ENCODE measurements at regions of chr11 and their contacts with region 1.

Region 1: GRCh38 chr11:33065445-33066178 is 26.2 kb downstream of the TCP11L1 start:
- H3K4me3 ChIP-seq: no peak overlapping the region
- H3K27ac ChIP-seq: no peak overlapping the region
- H3K4me1 ChIP-seq: no peaks in the 10 kb centered on the region
- CTCF ChIP-seq: peak; percentile 76

Region 2: GRCh38 chr11:32809313-32809712 is 256.3 kb before region 1 on chr11:
- CTCF ChIA-PET with region 1: interaction called, 18 read pairs
- POLR2A ChIA-PET with region 1: no interaction called
- H3K4me3 ChIP-seq: no peak overlapping the region
- H3K27ac ChIP-seq: no peak overlapping the region
- H3K4me1 ChIP-seq: no peaks in the 10 kb centered on the region
- CTCF ChIP-seq: no peak

Region 3: GRCh38 chr11:32947978-32948377 is 117.6 kb before region 1 on chr11:
- CTCF ChIA-PET with region 1: no interaction called
- POLR2A ChIA-PET with region 1: no interaction called
- H3K4me3 ChIP-seq: no peak overlapping the region
- H3K27ac ChIP-seq: no peak overlapping the region
- H3K4me1 ChIP-seq: no peaks in the 10 kb centered on the region
- CTCF ChIP-seq: no peak

Region 4: GRCh38 chr11:32960553-32961164 is 105.0 kb before region 1 on chr11:
- CTCF ChIA-PET with region 1: interaction called, 41 read pairs
- POLR2A ChIA-PET with region 1: no interaction called
- H3K4me3 ChIP-seq: no peak overlapping the region
- H3K27ac ChIP-seq: no peak overlapping the region
- H3K4me1 ChIP-seq: no peaks in the 10 kb centered on the region
- CTCF ChIP-seq: no peak

Region 5: GRCh38 chr11:33039274-33040032 is 26.2 kb before region 1 on chr11 and contains the start of gene TCP11L1:
- CTCF ChIA-PET with region 1: interaction called, 11 read pairs
- POLR2A ChIA-PET with region 1: interaction called, 6 read pairs
- H3K4me3 ChIP-seq: peak within 1 kb of the TSS; percentile 96
- H3K27ac ChIP-seq: peak within 1 kb of the TSS; percentile 94
- H3K4me1 ChIP-seq: peaks cover 8% of the 10 kb centered on the region; the same call in 1 of the 2 replicates
- CTCF ChIP-seq: no peak; the same call in 1 of the 2 replicates

Region 6: DNA sequence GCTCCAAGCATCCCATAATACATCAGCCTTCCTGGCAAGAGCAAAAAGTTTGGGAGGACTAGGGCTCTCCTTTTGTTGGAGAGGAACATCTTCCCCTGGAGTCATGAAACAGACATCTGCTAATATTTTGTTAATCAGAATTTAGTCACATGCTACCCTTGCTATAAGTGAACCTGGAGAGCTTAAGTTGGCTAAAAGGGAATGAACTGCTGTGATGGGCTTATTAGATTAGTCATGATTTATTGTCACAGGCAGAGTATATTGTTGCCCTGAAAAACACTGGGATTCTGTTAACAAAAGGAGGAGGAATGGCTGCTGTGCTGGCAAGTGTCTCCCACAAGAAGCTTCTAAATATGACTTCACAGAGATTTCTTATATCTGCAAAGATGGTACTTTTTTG is 10.3 kb before region 1 on chr11:
- CTCF ChIA-PET with region 1: interaction called, 12 read pairs
- POLR2A ChIA-PET with region 1: no interaction called
- H3K4me3 ChIP-seq: no peak overlapping the region
- H3K27ac ChIP-seq: no peak overlapping the region
- H3K4me1 ChIP-seq: no peaks in the 10 kb centered on the region
- CTCF ChIP-seq: no peak

Region 7: DNA sequence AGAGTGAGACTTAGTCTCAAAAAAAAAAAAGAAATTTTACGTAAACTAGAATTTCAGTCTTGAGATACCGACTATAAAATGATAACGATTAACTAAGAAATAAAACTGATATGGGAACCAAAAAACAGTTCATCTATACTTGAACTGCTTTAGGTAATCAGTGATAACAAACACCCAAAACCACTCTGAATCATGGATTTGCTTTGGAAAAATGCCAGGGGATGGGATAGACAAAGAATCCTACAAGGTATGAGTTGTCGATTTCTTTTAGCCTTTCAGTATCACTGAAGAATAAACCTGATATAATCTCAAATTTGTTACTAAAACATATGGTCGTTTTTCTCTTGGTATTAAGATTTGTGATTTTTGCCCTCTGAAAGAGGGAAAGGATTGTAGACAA is 81.9 kb after region 1 on chr11:
- CTCF ChIA-PET with region 1: no interaction called
- POLR2A ChIA-PET with region 1: no interaction called
- H3K4me3 ChIP-seq: no peak overlapping the region
- H3K27ac ChIP-seq: no peak overlapping the region
- H3K4me1 ChIP-seq: 0 out of 2 replicates have a peak, but pooled peaks cover 4% of the 10 kb centered on the region
- CTCF ChIP-seq: no peak

Region 8: GRCh38 chr11:33179348-33179803 is 113.8 kb after region 1 on chr11:
- CTCF ChIA-PET with region 1: no interaction called
- POLR2A ChIA-PET with region 1: no interaction called
- H3K4me3 ChIP-seq: no peak overlapping the region
- H3K27ac ChIP-seq: no peak overlapping the region
- H3K4me1 ChIP-seq: no peaks in the 10 kb centered on the region
- CTCF ChIP-seq: no peak